ENCODE measurements at regions of chr11 and their contacts with region 1.

Region 1: GRCh38 chr11:106724293-106724892 is 293.9 kb downstream of the GUCY1A2 start:
- DNase-seq: no peak
- H3K4me3 ChIP-seq: no peak overlapping the region
- H3K27ac ChIP-seq: no peak overlapping the region
- H3K4me1 ChIP-seq: no peaks in the 10 kb centered on the region
- H3K27me3 ChIP-seq: no peaks in the 10 kb centered on the region
- CTCF ChIP-seq: no peak
- POLR2A ChIP-seq: no peak

Region 2: DNA sequence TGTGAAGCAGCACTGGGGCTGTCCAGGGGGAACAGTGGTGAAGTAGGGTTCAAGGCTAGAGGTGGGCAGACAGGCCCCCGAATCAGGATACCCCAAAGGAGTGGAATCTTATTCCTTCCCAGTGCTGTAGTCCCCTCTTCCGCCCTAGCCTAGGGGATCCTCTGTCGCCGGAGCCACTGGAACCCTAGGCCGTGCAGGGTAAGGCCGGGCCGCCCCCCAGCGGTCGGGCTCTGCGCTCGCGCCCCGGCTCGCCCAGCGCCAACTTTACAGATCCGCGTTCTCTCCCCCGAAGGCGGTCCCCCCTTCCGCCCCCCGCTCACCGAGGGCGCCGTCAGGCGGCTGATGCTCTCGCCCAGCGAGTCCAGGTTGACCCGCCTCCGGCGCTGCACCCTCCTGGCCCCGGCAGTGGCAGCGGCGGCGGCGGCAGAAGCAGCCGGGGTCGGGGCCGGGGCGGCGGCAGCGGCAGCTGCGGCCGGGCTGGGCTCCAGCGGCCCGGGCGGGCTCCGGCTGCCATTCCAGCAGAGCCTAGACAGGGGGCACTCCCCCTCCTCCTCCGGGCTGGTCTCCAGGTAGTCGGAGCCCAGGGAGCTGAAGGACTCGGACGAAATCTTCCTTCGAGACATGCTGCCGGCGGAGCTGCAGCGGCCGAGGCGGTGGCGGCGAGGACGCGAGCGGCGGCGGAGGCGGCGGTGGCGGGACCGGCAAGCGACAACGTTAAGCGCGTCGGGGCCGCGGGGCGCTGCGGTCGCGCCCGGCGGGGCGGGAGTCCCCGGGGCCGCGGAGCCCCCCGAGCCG is 293.2 kb after region 1 on chr11:
- intact Hi-C with region 1: loop called (anchors 10 kb)
- DNase-seq: no peak
- H3K4me3 ChIP-seq: peak overlapping the region; percentile 49 to 82
- H3K27ac ChIP-seq: peak overlapping the region; percentile 72
- H3K4me1 ChIP-seq: peaks cover 15% of the 10 kb centered on the region
- H3K27me3 ChIP-seq: no peaks in the 10 kb centered on the region
- CTCF ChIP-seq: peak in 2 of 3 experiments; percentile 30 to 36
- POLR2A ChIP-seq: no peak

Measured in vagina (tissue), 2 donors.